Activated T-helper 1 cell treated with anti-CD3 and anti-CD28 coated beads, Interleukin-12 subunit alpha, Interleukin-12 subunit beta, Interleukin-2, Interleukin-4 antibody, amounts not matched to agents 30 ng/mL and 10 ng/mL and 1 ng/mL, durations not matched to agents 14 hours and 24 hours and 36 hours (primary cell): ENCODE measurements at regions of chr13 and their contacts with region 1.

Region 1: DNA sequence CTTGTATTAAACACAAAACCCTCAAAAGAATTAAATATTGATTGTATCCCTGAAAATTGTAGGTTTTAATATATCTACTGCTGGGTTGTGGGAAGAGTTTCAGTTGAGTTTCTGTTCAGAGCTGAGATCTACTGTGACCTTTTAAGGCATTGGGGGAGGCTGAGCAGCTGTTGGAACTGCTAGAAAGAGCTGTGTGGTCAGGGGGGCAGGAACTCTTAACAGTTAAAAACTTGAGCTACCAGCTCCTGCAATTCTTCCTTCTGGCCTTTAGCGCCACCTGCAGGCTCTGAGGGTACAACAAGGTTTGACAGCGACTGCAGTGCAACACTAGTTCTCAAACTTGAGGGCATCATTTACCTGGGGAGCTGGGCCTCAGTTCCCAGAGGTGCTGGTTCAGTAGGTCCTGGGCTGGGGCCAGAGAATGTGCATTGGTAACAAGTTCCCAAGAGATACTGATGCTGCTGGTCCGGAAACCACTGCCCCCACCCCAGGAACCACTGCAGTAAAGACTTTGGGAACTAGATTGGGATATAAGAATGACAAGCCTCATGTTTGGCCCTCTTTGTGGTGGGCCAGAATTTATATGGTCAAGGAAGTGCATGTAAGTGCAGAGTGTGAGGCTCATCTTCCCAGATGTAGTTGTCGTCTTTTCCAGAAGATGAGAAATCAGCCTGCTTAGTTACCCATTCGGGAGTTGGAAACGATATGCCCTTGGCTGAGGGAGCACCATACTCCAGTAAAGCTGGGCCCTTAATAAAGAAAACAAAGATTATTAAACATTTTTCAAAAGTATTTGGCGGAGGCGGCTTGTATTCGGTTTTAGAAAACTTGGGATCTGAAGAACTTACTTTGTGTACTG is 2.6 kb downstream of the RNASEH2B start:
- DNase-seq: peak; percentile 87
- H3K4me3 Mint-ChIP-seq: peak overlapping the region; percentile 82
- H3K27ac Mint-ChIP-seq: peak overlapping the region; percentile 37
- H3K4me1 Mint-ChIP-seq: peaks cover 68% of the 10 kb centered on the region
- H3K27me3 Mint-ChIP-seq: no peaks in the 10 kb centered on the region

Region 2: DNA sequence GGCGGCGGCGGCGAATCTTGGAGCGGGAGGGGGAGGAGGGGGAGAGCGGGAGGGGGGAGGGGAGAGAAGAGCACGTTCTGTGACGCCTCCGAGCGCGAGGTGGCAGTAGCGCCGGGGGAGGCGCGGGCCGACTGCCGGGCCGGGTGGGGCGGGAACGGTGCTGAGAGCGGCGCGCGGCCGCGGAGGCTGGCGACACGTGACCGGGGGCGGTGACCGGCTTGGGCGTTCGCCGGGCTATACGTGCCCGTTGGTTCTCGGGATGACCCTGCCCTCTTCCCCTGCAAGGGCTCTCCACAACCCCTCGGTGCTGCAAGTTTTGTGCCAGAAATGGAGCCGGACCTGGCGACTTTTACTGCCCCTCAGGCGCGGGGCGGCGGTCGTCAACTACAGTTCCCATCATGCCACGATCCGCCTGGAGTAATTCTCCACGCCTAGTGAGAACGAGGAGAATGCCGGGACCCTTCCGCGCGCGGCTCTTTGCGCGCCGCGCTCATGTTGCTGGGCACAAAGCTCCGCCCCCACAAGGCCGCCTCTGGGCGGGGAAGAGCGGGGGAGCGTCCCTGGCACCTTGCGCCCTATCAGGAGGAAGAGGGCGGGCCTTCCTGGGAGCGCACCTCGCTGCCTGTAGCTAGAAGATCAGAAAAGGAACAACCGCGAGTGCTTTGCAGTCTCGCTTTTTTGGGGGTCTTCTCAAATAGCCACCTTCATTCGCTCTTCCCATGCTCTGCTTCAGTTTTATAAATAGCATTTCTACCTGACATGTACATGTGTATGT is 1119.4 kb before region 1 on chr13 and contains the start of gene KPNA3:
- intact Hi-C with region 1: loop called (anchors 1 kb)
- DNase-seq: peak; percentile 93
- H3K4me3 Mint-ChIP-seq: peak within 1 kb of the TSS; percentile 96
- H3K27ac Mint-ChIP-seq: peak within 1 kb of the TSS; percentile 97
- H3K4me1 Mint-ChIP-seq: peaks cover 30% of the 10 kb centered on the region
- H3K27me3 Mint-ChIP-seq: peaks cover 6% of the 10 kb centered on the region
- total RNA-seq, gene KPNA3: 54.7 and 55.0 TPM in 2 replicates

Region 3: GRCh38 chr13:49976314-49977258 is 935.6 kb before region 1 on chr13:
- intact Hi-C with region 1: loop called (anchors 1 kb)
- DNase-seq: peak; percentile 56
- H3K4me3 Mint-ChIP-seq: no peak overlapping the region
- H3K27ac Mint-ChIP-seq: no peak overlapping the region
- H3K4me1 Mint-ChIP-seq: peaks cover 5% of the 10 kb centered on the region
- H3K27me3 Mint-ChIP-seq: no peaks in the 10 kb centered on the region

Region 4: DNA sequence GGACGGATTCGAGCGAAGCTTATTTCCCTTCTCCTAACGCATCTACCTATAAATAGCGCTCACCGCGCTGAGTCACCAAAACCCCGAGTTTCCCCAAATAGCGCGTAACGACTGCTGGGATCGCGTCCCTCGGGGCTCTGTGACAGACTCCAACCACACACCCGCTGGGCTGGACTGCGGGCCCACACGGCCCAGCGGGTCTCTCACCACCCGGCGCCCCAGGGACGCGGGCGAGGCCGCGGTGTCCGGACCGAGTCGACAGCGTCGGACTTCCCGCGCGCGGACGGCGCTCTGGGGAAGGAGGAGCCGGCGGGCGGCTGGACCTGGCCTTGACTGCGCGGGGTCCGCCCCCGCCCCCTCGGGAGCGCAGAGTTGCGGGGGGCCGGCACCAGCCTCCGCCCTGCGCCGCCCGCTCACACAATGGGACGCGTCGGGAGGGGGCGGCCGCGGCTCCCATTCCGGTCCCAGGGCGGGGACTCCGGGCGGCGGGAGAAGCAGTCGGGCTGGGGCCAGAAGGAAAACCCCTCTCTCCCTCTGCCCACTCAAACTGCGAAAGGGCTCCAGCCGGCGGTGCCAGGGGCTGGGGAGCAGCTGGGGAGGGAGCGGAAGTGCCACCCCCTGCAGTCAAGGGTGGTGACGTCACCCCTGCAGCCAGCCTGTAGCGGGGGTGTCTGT is 788.2 kb before region 1 on chr13:
- intact Hi-C with region 1: loop called (anchors 1 kb)
- DNase-seq: peak; percentile 62
- H3K4me3 Mint-ChIP-seq: peak overlapping the region; percentile 88
- H3K27ac Mint-ChIP-seq: peak overlapping the region; percentile 91
- H3K4me1 Mint-ChIP-seq: peaks cover 50% of the 10 kb centered on the region
- H3K27me3 Mint-ChIP-seq: peaks cover 1% of the 10 kb centered on the region

Region 5: DNA sequence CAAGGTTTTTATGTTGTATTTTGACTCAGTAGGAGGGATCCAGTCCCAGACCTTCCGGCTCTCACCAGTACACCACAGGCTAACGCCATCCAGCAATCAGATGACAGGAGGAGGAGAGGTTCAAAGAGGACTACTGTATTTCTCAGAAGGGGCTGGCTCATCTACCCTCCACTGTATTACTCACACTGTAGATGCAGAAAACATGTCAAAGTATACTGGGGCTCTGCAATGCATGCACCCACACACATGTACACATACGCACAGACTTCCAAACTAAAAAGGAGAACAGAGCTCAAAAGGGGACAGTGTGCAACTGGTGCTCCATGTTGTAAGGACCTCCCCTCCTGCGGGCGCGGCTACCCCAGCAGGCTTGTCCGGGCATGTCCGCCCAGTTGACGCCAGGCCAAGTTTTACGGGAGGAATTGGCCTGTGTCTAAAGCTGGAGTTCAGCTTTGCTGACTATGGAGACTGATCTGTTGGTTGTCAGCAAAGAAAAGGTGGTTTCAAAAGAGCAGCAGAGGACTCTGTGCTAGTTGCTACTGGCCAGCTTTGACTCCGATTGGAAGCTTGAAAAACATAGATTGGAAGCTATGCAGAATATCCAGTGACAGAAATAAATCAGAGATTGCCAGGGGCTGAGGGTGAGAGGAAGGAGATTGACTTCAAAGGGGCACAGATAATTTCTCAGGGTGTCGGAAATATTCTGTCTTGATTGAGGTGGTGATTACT is 382.8 kb before region 1 on chr13:
- intact Hi-C with region 1: loop called (anchors 5 kb)
- DNase-seq: no peak
- H3K4me3 Mint-ChIP-seq: no peak overlapping the region
- H3K27ac Mint-ChIP-seq: peak overlapping the region; percentile 59
- H3K4me1 Mint-ChIP-seq: peaks cover 45% of the 10 kb centered on the region
- H3K27me3 Mint-ChIP-seq: peaks cover 19% of the 10 kb centered on the region

Region 6: GRCh38 chr13:50580684-50581305 is 331.4 kb before region 1 on chr13:
- intact Hi-C with region 1: no loop called
- DNase-seq: no peak
- H3K4me3 Mint-ChIP-seq: no peak overlapping the region
- H3K27ac Mint-ChIP-seq: no peak overlapping the region
- H3K4me1 Mint-ChIP-seq: no peaks in the 10 kb centered on the region
- H3K27me3 Mint-ChIP-seq: peaks cover 10% of the 10 kb centered on the region

Region 7: DNA sequence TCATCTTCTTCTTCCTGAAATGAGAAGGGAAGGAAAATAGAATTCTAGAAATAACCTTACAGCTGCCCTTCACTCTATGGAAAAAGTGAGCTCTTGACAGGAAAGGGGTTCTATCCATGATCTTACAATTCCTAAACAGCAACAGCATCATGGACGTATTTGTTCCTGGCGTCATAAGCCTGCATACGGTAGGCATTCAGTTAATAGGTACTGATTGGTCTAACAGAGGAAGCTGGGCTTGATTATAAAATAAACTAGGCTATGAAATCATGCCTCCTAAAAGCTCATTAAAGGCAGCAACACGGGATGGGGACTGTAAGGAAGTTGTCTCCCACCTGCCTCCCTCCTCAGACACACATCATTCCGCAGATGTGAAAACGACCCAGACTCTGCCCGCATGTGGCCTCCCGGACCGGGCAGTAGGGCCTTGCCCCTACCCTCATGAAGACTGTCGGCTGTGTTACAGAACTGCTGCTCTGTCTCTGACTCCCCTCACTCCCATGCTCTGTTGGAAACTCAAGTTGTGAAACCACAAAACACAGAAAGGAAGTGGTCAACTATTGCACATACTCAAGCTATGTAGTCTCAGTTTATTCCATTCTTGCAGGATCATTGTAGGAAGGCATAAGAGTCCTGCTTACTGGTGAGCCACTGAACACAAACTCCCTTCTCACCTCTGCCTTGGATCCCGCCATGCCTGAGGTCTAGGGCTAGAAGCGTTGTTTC is 198.5 kb before region 1 on chr13:
- intact Hi-C with region 1: loop called (anchors 5 kb)
- DNase-seq: peak; percentile 31
- H3K4me3 Mint-ChIP-seq: peak overlapping the region; percentile 31
- H3K27ac Mint-ChIP-seq: no peak overlapping the region
- H3K4me1 Mint-ChIP-seq: peaks cover 21% of the 10 kb centered on the region
- H3K27me3 Mint-ChIP-seq: peaks cover 22% of the 10 kb centered on the region

Region 8: GRCh38 chr13:50893211-50893852 is 18.8 kb before region 1 on chr13:
- intact Hi-C with region 1: loop called (anchors 1 kb)
- DNase-seq: peak; percentile 40
- H3K4me3 Mint-ChIP-seq: peak overlapping the region; percentile 77
- H3K27ac Mint-ChIP-seq: peak overlapping the region; percentile 87
- H3K4me1 Mint-ChIP-seq: peaks cover 49% of the 10 kb centered on the region
- H3K27me3 Mint-ChIP-seq: no peaks in the 10 kb centered on the region

Region 9: GRCh38 chr13:50928659-50929462 is 16.7 kb after region 1 on chr13:
- intact Hi-C with region 1: no loop called
- DNase-seq: no peak
- H3K4me3 Mint-ChIP-seq: no peak overlapping the region
- H3K27ac Mint-ChIP-seq: no peak overlapping the region
- H3K4me1 Mint-ChIP-seq: peaks cover 5% of the 10 kb centered on the region
- H3K27me3 Mint-ChIP-seq: no peaks in the 10 kb centered on the region

Region 10: DNA sequence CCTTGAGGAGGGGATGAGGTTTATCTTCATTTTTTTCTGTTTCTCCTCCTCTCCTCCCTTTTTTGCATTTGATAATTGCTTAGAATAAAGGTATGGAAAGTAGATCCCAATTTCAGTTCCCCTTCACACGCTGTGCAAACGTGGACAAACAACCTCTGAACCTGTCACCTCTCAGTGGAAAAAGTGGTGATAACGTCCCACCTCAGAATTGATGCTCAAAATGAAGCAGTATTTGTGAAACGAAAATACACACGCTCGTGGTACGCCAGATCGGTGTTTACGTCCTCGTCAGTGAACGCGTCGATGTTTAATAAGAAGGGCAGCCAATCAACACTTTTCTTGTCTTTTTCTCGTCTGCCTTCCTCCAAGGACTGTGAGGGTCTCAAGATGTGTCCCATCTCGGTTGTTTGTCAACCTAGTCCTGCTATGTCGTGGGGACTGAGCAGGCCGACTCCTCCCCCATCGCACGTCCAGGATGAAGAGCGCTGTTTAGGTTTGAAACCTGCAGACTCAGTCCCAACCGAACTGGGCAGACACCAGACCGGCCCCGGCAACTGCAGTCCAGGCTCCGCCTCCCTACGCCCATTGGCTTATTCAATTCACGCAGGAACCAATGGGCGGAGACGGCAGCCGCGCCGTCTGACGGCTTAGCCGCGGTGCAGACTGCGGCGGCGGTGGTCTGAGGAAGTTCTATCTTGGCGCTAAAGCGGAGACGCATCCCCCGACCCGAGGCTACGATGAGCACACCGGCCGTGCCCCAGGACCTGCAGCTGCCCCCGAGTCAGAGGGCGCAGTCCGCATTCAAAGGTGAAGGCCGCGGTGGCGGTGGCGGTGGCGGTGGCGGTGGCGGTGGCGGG is 1542.9 kb after region 1 on chr13 and contains the start of gene CKAP2:
- intact Hi-C with region 1: no loop called
- DNase-seq: peak; percentile 92
- H3K4me3 Mint-ChIP-seq: peak within 1 kb of the TSS; percentile 89
- H3K27ac Mint-ChIP-seq: peak within 1 kb of the TSS; percentile 90
- H3K4me1 Mint-ChIP-seq: peaks cover 71% of the 10 kb centered on the region
- H3K27me3 Mint-ChIP-seq: peaks cover 2% of the 10 kb centered on the region
- total RNA-seq, gene CKAP2: 36.9 and 37.3 TPM in 2 replicates